ENCODE measurements at regions of chr19 and their contacts with region 1.

Region 1: DNA sequence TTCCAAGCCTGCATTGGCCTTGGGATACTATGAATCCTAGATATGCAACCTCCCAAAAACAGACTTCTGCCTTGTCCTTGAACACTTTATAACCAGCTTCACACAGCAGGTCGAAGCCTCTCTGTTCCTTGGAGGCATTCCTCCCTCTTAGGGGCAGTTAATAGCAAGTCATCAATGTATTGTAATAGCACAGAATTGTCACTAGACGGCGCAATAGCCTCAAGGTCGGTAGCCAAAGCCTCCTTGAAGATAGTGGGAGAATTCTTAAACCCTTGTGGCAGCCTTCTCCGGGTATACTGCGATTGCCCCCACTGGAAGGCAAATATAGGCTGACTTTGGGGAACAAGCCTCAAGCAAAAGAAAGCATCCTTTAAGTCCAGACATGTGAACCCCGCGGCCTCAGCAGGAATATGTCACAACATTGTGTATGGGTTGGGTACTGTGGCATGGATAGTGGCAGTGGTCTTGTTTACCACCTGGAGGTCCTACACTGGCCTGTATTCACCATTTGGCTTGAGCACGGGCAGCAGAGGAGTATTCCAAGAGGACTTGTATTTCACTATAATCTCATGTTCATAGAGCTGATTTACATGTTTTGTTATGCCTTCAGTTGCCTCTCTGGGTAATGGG is 61.1 kb downstream of the ZNF431 start:
- DNase-seq: peak; percentile 24 to 45 (median 37)
- H3K4me3 ChIP-seq: no peak overlapping the region
- H3K4me3 Mint-ChIP-seq: no peak overlapping the region
- H3K27ac ChIP-seq: no peak overlapping the region
- H3K27ac Mint-ChIP-seq: peak overlapping the region in 1 of 7 donors; percentile 28
- H3K4me1 ChIP-seq: no peaks in the 10 kb centered on the region
- H3K4me1 Mint-ChIP-seq: peaks cover 8% of the 10 kb centered on the region
- H3K27me3 ChIP-seq: no peaks in the 10 kb centered on the region
- H3K27me3 Mint-ChIP-seq: peaks cover 0 to 3% (median 1%) of the 10 kb centered on the region in 3 donors
- CTCF ChIP-seq: peak; percentile 81

Region 2: GRCh38 chr19:21256722-21257121 is 53.7 kb after region 1 on chr19:
- intact Hi-C with region 1: no loop called
- DNase-seq: no peak
- H3K4me3 ChIP-seq: no peak overlapping the region
- H3K4me3 Mint-ChIP-seq: no peak overlapping the region
- H3K27ac ChIP-seq: no peak overlapping the region
- H3K27ac Mint-ChIP-seq: no peak overlapping the region
- H3K4me1 ChIP-seq: no peaks in the 10 kb centered on the region
- H3K4me1 Mint-ChIP-seq: no peaks in the 10 kb centered on the region
- H3K27me3 ChIP-seq: no peaks in the 10 kb centered on the region
- H3K27me3 Mint-ChIP-seq: peaks cover 0 to 1% (median 1%) of the 10 kb centered on the region in 3 donors
- CTCF ChIP-seq: no peak

Region 3: DNA sequence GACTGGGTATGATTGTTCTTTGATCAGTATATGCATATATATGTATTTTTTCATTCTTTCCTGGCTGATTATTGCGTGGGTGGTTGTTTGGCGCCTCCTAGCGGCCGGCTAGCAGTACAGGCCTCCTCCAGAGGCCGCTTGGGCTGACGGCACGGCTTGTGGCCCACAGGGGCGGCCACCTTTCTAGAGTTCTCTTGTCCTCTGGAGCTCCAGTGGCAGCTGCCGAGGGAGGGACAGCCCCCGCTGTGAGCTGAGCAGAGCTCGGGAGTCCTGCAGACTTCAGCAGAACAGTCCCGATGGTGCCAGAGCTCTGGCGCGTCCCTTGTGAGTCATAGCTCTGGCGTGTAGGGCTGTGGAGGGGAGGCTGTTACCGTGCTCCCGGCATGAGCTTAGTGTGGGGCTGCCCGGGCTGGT is 279.9 kb after region 1 on chr19:
- intact Hi-C with region 1: loop called in 1 of 2 experiments (anchors 5 kb)
- DNase-seq: peak; percentile 38 to 64 (median 45)
- H3K4me3 ChIP-seq: peak overlapping the region in 1 of 3 experiments; percentile 30
- H3K4me3 Mint-ChIP-seq: peak overlapping the region in 1 of 2 donors; percentile 65
- H3K27ac ChIP-seq: no peak overlapping the region
- H3K27ac Mint-ChIP-seq: no peak overlapping the region
- H3K4me1 ChIP-seq: peaks cover 0 to 3% of the 10 kb centered on the region in 2 donors
- H3K4me1 Mint-ChIP-seq: no peaks in the 10 kb centered on the region
- H3K27me3 ChIP-seq: no peaks in the 10 kb centered on the region
- H3K27me3 Mint-ChIP-seq: peaks cover 0 to 1% (median 0%) of the 10 kb centered on the region in 3 donors
- CTCF ChIP-seq: peak; percentile 96

Region 4: DNA sequence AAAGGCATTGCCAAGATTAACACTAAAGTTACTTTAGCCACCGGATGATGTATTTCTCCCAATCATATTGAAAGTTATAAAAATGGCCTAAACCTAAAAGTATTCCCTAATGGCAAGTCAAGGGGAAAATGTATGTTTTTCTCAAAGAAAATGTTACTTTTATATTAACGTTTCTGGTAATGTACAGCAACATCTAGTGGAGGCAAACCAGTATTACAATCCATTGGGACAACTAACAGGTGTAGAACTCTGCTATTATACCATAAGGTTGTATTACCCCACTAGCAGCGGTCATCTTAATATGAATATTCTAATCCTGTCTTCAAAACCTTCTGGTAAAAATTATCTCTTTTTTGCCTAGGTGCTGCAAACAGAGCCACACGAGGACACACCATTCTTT is 495.2 kb after region 1 on chr19:
- intact Hi-C with region 1: loop called (anchors 5 kb)
- DNase-seq: peak; percentile 12 to 42 (median 20)
- H3K4me3 ChIP-seq: no peak overlapping the region
- H3K4me3 Mint-ChIP-seq: no peak overlapping the region
- H3K27ac ChIP-seq: no peak overlapping the region
- H3K27ac Mint-ChIP-seq: no peak overlapping the region
- H3K4me1 ChIP-seq: no peaks in the 10 kb centered on the region
- H3K4me1 Mint-ChIP-seq: no peaks in the 10 kb centered on the region
- H3K27me3 ChIP-seq: no peaks in the 10 kb centered on the region
- H3K27me3 Mint-ChIP-seq: peaks cover 0 to 5% (median 1%) of the 10 kb centered on the region in 3 donors
- CTCF ChIP-seq: peak; percentile 76

Region 5: GRCh38 chr19:21704320-21704719 is 501.3 kb after region 1 on chr19:
- intact Hi-C with region 1: loop called (anchors 5 kb)
- DNase-seq: no peak
- H3K4me3 ChIP-seq: no peak overlapping the region
- H3K4me3 Mint-ChIP-seq: no peak overlapping the region
- H3K27ac ChIP-seq: no peak overlapping the region
- H3K27ac Mint-ChIP-seq: no peak overlapping the region
- H3K4me1 ChIP-seq: no peaks in the 10 kb centered on the region
- H3K4me1 Mint-ChIP-seq: no peaks in the 10 kb centered on the region
- H3K27me3 ChIP-seq: no peaks in the 10 kb centered on the region
- H3K27me3 Mint-ChIP-seq: peaks cover 0 to 1% (median 0%) of the 10 kb centered on the region in 3 donors
- CTCF ChIP-seq: no peak

Measured in CD14-positive monocyte (primary cell).